ENCODE measurements at regions of chr5 and their contacts with region 1.

Region 1: GRCh38 chr5:14264604-14265316 is 121.6 kb downstream of the TRIO start:
- DNase-seq: peak; percentile 92 to 97
- H3K4me3 ChIP-seq: peak overlapping the region; percentile 1 to 21 (median 16)
- H3K27ac ChIP-seq: peak overlapping the region in 4 of 5 donors; percentile 36 to 69 (median 48)
- H3K4me1 ChIP-seq: peaks cover 23 to 74% (median 45%) of the 10 kb centered on the region in 4 donors
- H3K27me3 ChIP-seq: no peaks in the 10 kb centered on the region
- CTCF ChIP-seq: no peak
- EP300 ChIP-seq: no peak
- POLR2A ChIP-seq: no peak

Region 2: DNA sequence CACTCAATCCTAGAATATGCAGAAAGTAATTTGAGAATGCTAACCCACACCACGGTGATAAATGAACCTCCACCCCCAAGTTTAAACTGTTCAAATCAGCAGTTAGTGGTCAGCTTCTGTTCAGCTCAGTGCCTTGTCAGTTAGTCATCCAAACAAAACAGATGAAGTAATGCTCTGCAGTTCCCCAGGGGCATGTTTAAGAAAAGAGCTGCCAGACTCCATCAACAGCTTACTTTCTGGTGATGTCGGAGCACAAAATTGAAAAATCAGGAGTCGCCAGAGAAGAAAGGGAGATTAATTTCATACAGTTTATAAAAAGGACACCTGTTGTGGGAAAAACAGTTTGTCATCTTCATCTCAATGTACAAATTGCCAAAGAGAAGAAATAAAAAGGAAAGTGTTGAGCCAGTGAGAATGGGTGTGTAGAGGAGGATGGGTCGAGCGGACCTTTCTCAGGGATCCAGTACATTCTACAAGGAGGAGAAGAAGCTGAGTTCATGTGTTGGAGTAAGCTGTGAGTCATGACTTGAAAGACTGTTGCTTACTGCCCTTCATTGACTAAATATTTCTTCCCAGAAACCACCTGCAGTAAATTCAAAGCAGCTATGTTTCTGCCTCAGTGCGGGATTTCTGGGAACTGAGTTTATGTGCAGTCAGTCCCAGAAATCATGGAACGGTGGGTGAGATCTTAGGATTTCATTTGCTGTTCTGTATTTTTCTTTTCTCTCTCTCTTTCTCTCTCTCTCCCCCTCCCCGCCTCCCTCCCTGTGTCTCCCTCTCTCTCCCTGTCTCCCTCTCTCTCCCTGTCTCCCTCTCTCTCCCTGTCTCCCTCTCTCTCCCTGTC is 107.9 kb before region 1 on chr5:
- intact Hi-C with region 1: loop called (anchors 10 kb)
- DNase-seq: peak in 1 of 2 donors; percentile 74
- H3K4me3 ChIP-seq: peak overlapping the region in 2 of 4 donors; percentile 14 to 15
- H3K27ac ChIP-seq: peak overlapping the region; percentile 38 to 82 (median 70)
- H3K4me1 ChIP-seq: peaks cover 42 to 91% (median 68%) of the 10 kb centered on the region in 4 donors
- H3K27me3 ChIP-seq: no peaks in the 10 kb centered on the region
- CTCF ChIP-seq: no peak
- EP300 ChIP-seq: no peak
- POLR2A ChIP-seq: no peak